Activated naive CD4-positive, alpha-beta T cell treated with anti-CD3 and anti-CD28 coated beads for 36 hours (primary cell): ENCODE measurements at regions of chr14 and their contacts with region 1.

Region 1: DNA sequence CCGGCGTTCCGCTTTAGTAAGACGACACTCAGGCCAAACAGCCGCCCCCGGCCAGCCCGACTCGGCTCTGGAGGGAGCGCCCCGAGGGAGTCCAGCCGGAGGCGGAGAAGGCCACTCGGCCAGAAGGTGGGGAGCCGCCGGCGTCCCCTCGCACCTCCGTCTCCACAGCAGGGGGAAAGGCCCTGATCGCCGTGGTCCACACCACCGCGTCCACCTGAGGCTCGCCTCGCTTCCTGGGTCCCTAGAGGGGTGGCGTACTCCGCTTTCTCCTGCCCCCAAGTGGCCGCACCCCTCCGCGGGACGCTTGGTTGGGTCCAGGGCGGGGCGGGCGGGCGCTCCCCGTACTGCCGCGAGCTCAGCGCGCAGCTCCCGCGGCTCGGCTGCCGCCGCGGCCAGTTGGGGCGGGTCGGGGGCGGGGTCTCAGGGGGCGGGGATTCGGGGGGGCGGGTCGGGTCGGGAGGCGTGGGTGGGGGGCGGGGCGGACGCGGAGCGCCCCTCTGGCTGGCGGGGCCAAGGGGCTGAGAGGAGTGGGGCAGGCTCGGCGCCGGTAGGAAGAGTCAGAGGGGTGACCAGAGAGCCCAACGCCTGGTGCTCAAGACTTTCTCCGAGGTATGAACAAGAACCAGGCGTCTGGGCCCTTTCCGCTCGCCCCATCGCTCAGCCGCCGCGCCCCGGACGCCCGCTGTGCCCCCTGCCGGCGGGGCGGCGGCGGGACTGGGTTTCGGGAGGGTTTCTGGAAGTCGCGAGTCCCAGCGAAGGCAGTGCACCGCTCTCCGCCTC is at the start of gene FRMD6:
- DNase-seq: peak; percentile 82
- H3K4me3 Mint-ChIP-seq: peak within 1 kb of the TSS; percentile 78
- H3K27ac Mint-ChIP-seq: peak within 1 kb of the TSS; percentile 41
- H3K4me1 Mint-ChIP-seq: peaks cover 21% of the 10 kb centered on the region
- H3K27me3 Mint-ChIP-seq: peaks cover 7% of the 10 kb centered on the region
- total RNA-seq, gene FRMD6: 3.0 to 3.2 TPM

Region 2: DNA sequence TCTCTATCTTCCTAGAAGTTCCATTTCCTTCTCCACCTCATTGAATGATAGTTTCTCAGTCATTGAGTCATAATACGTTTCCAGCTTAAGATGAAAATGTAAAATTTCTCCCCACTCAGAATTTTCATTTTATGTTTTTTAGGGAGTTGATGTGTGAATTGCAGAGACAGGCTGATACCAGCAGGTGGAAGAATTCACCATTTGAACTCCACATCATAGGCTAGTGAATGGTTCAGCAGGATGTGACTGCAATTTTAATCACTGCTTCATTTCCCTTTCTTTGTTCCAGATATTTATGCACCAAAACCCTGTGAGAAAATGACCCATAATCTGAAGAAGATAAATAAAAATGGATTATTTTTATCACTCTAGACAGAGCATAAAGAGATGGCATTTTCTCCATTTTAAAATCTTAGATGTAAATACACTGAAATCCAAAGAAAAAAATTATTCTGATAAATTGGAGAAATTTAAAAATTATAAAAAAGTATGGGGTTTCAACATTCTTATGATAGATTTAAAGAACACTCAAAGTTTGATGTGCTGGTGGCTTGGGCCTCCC is 696.7 kb before region 1 on chr14:
- CTCF ChIA-PET with region 1: no interaction called
- intact Hi-C with region 1: loop called (anchors 5 kb)
- DNase-seq: no peak
- H3K4me3 Mint-ChIP-seq: no peak overlapping the region
- H3K27ac Mint-ChIP-seq: no peak overlapping the region
- H3K4me1 Mint-ChIP-seq: peaks cover 6% of the 10 kb centered on the region
- H3K27me3 Mint-ChIP-seq: no peaks in the 10 kb centered on the region

Region 3: DNA sequence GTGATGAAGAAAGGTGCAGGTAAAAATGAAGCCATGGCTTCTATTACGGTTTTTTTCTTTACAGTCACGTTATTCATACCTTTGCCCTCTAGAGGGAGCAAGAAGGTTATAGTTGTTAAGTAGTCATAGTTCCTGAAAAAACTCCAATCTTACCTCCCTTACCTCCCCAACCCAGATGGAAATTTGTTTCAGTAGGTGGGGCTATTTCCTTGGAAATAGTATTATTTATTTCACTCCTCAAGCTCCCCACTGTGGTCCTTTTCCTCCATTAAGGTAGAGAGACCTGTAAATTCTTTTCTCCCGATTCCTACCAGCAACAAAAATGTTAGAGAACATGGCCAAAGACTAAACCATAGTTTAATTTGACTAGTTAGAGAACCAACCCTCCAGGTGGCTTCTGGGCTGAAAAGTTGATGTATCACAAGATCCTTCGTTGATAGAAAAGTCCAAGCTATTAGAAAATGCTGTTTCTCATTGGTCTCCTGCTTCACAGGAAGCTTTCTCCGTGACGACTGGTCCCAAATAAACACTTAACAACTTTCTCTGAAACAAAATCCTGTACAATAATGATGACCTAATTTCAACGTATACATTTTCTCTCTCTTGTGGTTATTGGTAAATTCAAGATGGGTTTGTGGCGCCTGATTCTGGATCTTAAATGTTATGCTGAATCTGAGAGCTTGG is 368.0 kb before region 1 on chr14:
- CTCF ChIA-PET with region 1: interaction called, 6 read pairs
- intact Hi-C with region 1: loop called (anchors 2 kb)
- DNase-seq: no peak
- H3K4me3 Mint-ChIP-seq: no peak overlapping the region
- H3K27ac Mint-ChIP-seq: no peak overlapping the region
- H3K4me1 Mint-ChIP-seq: no peaks in the 10 kb centered on the region
- H3K27me3 Mint-ChIP-seq: no peaks in the 10 kb centered on the region

Region 4: GRCh38 chr14:51576117-51576430 is 75.5 kb before region 1 on chr14:
- CTCF ChIA-PET with region 1: no interaction called
- intact Hi-C with region 1: no loop called
- DNase-seq: no peak
- H3K4me3 Mint-ChIP-seq: no peak overlapping the region
- H3K27ac Mint-ChIP-seq: no peak overlapping the region
- H3K4me1 Mint-ChIP-seq: no peaks in the 10 kb centered on the region
- H3K27me3 Mint-ChIP-seq: peaks cover 18% of the 10 kb centered on the region

Region 5: DNA sequence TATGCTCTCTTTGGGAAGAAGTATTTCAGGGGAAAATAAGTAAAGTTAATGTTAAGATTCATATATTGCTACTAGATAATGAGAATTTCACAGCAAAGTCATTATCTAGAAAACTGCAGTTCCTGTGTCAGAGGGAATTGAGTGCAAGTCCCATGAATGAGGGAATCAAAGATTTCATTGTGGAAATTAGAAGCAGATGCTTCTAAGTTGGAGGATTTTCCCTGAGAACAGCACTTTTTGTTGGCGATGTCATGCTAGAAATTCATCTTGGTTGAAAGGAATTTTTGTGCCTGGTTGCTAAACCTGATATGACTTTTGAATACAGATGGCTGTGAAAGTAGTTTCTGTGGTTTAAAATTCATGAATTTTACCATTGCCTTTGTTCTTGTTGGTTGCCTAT is 25.7 kb after region 1 on chr14:
- CTCF ChIA-PET with region 1: interaction called, 8 read pairs
- intact Hi-C with region 1: loop called (anchors 1 kb)
- DNase-seq: no peak
- H3K4me3 Mint-ChIP-seq: no peak overlapping the region
- H3K27ac Mint-ChIP-seq: no peak overlapping the region
- H3K4me1 Mint-ChIP-seq: peaks cover 21% of the 10 kb centered on the region
- H3K27me3 Mint-ChIP-seq: peaks cover 8% of the 10 kb centered on the region

Region 6: DNA sequence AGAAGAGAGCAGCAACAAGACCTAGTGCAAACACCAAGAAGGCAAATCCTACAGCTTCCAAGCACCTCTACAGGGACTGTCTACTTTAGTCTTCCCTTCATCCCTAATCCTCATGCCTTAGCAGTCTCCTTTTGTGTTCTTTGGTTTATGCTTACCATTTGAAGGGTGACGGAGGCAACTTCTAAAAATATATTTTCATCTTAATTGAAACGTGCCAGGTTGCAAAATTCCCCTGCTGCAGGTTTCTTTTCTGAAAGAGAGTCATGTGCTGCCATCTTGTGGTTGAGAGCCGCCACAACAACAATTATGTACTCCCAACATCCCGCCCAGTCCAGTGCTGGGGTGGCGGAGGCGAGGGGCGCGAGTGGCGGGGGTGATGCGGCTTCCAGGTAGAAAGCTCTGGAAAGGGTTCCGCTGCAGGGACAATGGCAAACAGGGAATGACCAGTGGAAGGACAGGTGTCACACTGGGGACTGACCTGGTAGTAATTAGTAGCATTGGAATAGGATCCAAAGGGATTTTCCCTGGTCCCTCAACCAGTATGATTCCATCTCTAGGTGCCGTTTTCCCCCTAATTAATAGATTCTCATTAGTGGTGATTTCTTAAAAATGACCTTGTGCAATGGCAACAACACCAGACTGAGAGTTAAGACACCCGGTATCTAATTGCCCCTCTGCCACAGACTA is 128.6 kb after region 1 on chr14:
- CTCF ChIA-PET with region 1: interaction called, 32 read pairs
- intact Hi-C with region 1: loop called (anchors 1 kb)
- DNase-seq: peak; percentile 88
- H3K4me3 Mint-ChIP-seq: peak overlapping the region; percentile 0
- H3K27ac Mint-ChIP-seq: no peak overlapping the region
- H3K4me1 Mint-ChIP-seq: peaks cover 42% of the 10 kb centered on the region
- H3K27me3 Mint-ChIP-seq: no peaks in the 10 kb centered on the region

Region 7: DNA sequence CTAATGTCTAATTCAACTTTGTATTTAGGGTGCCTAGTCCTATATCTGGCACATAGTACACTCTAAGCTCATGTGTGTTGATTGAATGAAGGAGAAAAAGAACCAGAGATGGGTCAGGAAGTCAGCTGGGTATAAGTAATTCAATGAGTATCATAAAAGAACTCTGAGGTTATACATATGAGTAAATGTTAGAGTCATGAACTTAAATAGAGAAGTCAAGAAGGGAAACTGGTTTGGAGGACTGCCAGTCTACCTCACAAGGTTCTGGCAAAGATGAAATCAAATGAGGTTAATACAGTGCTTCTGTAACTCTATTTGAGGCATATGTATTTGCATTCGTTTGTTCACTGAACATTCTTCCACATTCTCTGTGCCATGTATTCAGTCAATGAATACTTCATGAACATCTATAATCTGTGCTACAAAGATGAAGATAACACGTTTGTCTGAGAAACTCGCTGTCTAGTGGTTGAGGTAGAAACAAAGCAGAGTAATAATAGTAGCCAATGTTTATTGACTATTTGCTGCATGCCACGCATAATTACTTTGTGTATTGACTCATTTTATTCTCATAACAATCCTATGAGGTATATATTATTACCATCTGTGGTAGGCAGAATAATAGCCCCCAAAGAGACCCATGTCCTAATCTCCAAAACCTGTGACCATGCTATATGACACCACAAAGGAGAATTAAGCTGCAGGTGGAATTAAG is 751.4 kb after region 1 on chr14:
- CTCF ChIA-PET with region 1: no interaction called
- intact Hi-C with region 1: loop called (anchors 10 kb)
- DNase-seq: peak; percentile 77
- H3K4me3 Mint-ChIP-seq: no peak overlapping the region
- H3K27ac Mint-ChIP-seq: no peak overlapping the region
- H3K4me1 Mint-ChIP-seq: peaks cover 50% of the 10 kb centered on the region
- H3K27me3 Mint-ChIP-seq: peaks cover 4% of the 10 kb centered on the region